Endothelial cell of umbilical vein (primary cell): ENCODE measurements at regions of chr6 and their contacts with region 1.

Region 1: DNA sequence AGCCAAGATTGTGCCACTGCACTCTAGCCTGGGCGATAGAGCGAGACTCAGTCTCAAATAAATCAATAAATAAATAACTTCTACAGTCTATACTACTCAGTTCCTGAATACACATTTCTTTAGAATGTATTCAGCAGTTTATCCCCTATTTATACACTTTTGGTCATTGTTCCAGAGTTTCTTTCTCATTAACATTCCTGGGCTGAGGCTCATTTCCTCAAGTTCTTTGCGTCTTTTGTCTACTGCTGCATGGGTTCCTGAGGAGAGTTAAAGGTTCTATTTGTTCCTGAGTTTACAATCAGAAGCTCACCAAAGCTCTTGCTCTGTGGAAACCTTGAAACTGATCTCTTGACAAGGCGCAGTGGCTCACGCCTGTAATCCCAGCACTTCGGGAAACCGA is 37.7 kb upstream of the SASH1 start:
- DNase-seq: peak; percentile 97
- H3K4me3 ChIP-seq: no peak overlapping the region
- H3K27ac ChIP-seq: peak overlapping the region; percentile 95
- H3K4me1 ChIP-seq: peaks cover 24% of the 10 kb centered on the region
- H3K27me3 ChIP-seq: no peaks in the 10 kb centered on the region
- CTCF ChIP-seq: no peak
- POLR2A ChIP-seq: no peak

Region 2: DNA sequence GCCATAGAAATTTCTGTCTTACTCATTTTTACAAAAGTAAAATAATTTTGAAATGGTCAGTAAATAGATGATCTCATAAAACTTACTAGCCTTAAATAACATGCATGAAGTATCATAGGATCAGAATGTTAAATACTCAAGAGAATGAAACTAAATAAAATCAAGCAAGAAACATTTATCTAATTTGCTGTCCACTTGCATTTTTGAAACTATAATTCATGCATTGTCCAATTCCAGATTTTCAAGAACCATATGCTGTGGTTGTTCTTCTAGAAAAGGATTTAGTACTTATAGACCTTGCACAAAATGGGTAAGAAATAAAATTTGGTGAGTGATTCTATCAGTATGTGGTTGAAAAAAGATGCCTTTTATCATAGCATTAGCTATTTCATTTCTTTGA is 993.8 kb before region 1 on chr6:
- CTCF ChIA-PET with region 1: no interaction called
- POLR2A ChIA-PET with region 1: no interaction called
- dilution Hi-C with region 1: no loop called
- intact Hi-C with region 1: no loop called
- DNase-seq: no peak
- H3K4me3 ChIP-seq: no peak overlapping the region
- H3K27ac ChIP-seq: no peak overlapping the region
- H3K4me1 ChIP-seq: no peaks in the 10 kb centered on the region
- H3K27me3 ChIP-seq: no peaks in the 10 kb centered on the region
- CTCF ChIP-seq: no peak
- POLR2A ChIP-seq: no peak

Region 3: GRCh38 chr6:147839708-147840610 is 465.0 kb before region 1 on chr6:
- CTCF ChIA-PET with region 1: no interaction called
- POLR2A ChIA-PET with region 1: no interaction called
- dilution Hi-C with region 1: no loop called
- intact Hi-C with region 1: no loop called
- DNase-seq: no peak
- H3K4me3 ChIP-seq: no peak overlapping the region
- H3K27ac ChIP-seq: no peak overlapping the region
- H3K4me1 ChIP-seq: no peaks in the 10 kb centered on the region
- H3K27me3 ChIP-seq: no peaks in the 10 kb centered on the region
- CTCF ChIP-seq: no peak
- POLR2A ChIP-seq: no peak

Region 4: GRCh38 chr6:148271711-148272439 is 33.1 kb before region 1 on chr6:
- CTCF ChIA-PET with region 1: interaction called, 6 read pairs
- POLR2A ChIA-PET with region 1: interaction called, 3 read pairs
- dilution Hi-C with region 1: no loop called
- intact Hi-C with region 1: loop called (anchors 1 kb)
- DNase-seq: peak; percentile 89
- H3K4me3 ChIP-seq: peak overlapping the region in 1 of 3 experiments; percentile 45
- H3K27ac ChIP-seq: peak overlapping the region; percentile 93
- H3K4me1 ChIP-seq: peaks cover 47% of the 10 kb centered on the region
- H3K27me3 ChIP-seq: no peaks in the 10 kb centered on the region
- CTCF ChIP-seq: no peak
- POLR2A ChIP-seq: peak; percentile 33

Region 5: DNA sequence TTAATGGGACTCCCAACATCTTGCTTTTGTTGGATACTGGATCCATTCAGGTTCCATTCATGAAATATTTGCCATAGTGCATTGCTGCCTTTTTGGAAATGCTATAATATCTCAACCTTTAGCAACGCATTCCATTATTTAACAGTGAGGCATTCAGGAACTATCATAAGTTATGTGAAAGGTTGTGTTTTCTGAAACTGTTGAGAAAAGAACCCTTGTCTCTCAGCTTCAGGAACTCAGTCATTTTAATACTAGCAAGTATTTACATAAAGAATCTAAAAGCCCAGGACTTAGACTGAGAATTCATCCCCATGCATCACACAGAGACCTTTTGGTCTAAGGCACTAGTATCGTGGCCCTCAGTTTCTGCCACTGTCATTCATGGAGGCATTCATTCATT is 12.8 kb after region 1 on chr6:
- CTCF ChIA-PET with region 1: interaction called, 6 read pairs
- POLR2A ChIA-PET with region 1: no interaction called
- dilution Hi-C with region 1: no loop called
- intact Hi-C with region 1: loop called (anchors 1 kb)
- DNase-seq: no peak
- H3K4me3 ChIP-seq: no peak overlapping the region
- H3K27ac ChIP-seq: peak overlapping the region; percentile 80
- H3K4me1 ChIP-seq: peaks cover 12% of the 10 kb centered on the region
- H3K27me3 ChIP-seq: no peaks in the 10 kb centered on the region
- CTCF ChIP-seq: no peak
- POLR2A ChIP-seq: no peak

Region 6: GRCh38 chr6:148329596-148330381 is 24.8 kb after region 1 on chr6:
- CTCF ChIA-PET with region 1: interaction called, 6 read pairs
- POLR2A ChIA-PET with region 1: interaction called, 13 read pairs
- dilution Hi-C with region 1: no loop called
- intact Hi-C with region 1: loop called (anchors 1 kb)
- DNase-seq: peak; percentile 83
- H3K4me3 ChIP-seq: no peak overlapping the region
- H3K27ac ChIP-seq: peak overlapping the region; percentile 46
- H3K4me1 ChIP-seq: peaks cover 31% of the 10 kb centered on the region
- H3K27me3 ChIP-seq: no peaks in the 10 kb centered on the region
- CTCF ChIP-seq: no peak
- POLR2A ChIP-seq: no peak

Region 7: GRCh38 chr6:148349466-148349865 is 44.5 kb after region 1 on chr6:
- CTCF ChIA-PET with region 1: no interaction called
- POLR2A ChIA-PET with region 1: no interaction called
- dilution Hi-C with region 1: no loop called
- intact Hi-C with region 1: no loop called
- DNase-seq: no peak
- H3K4me3 ChIP-seq: no peak overlapping the region
- H3K27ac ChIP-seq: no peak overlapping the region
- H3K4me1 ChIP-seq: peaks cover 40% of the 10 kb centered on the region
- H3K27me3 ChIP-seq: no peaks in the 10 kb centered on the region
- CTCF ChIP-seq: no peak
- POLR2A ChIP-seq: no peak

Region 8: DNA sequence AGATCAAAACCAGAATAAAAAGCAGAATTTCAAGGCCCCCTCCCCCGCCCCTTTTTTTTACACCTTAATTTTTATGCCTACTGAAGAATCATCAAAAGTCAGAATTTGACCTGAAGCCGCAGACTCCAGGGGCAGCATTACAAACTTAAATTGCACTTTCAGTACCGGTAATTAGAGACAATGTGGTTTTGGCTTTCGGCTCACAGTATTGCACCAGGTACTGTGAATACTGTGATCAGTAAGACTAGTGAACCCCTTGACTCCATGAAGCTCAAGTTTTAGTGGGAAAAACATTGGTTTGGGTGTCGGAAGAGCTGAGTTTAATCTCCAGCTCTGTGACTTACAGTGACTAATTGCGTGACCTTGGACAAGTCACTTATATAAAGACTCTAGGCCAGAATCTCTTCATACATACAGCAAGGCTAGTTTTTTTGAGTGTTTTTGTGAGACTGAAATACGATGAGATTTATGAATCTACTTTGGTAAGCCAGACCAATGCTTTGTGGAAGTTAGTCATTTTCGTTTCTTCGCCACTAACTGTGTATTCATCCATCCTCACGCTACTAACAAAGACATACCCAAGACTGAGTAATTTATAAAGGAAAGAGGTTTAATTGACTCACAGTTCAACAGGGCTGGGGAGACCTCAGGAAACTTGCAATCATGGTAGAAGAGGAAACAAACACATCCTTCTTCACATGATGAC is 152.3 kb after region 1 on chr6:
- CTCF ChIA-PET with region 1: no interaction called
- POLR2A ChIA-PET with region 1: interaction called, 10 read pairs
- dilution Hi-C with region 1: no loop called
- intact Hi-C with region 1: no loop called
- DNase-seq: peak; percentile 93
- H3K4me3 ChIP-seq: peak overlapping the region in 1 of 3 experiments; percentile 13
- H3K27ac ChIP-seq: peak overlapping the region; percentile 99
- H3K4me1 ChIP-seq: peaks cover 79% of the 10 kb centered on the region
- H3K27me3 ChIP-seq: no peaks in the 10 kb centered on the region
- CTCF ChIP-seq: no peak
- POLR2A ChIP-seq: no peak